ENCODE measurements at regions of chr17 and their contacts with region 1.

Region 1: GRCh38 chr17:29931231-29931932 is 1.4 kb upstream of the SSH2 start:
- DNase-seq: peak; percentile 44
- ATAC-seq: peak; percentile 77
- H3K4me3 Mint-ChIP-seq: no peak overlapping the region
- H3K27ac Mint-ChIP-seq: no peak overlapping the region
- H3K4me1 Mint-ChIP-seq: peaks cover 33% of the 10 kb centered on the region
- H3K27me3 Mint-ChIP-seq: no peaks in the 10 kb centered on the region
- CTCF ChIP-seq: no peak

Region 2: GRCh38 chr17:29589524-29590410 is 341.6 kb before region 1 on chr17 and contains the start of gene GIT1:
- CTCF ChIA-PET with region 1: interaction called, 16 read pairs
- POLR2A ChIA-PET with region 1: no interaction called
- intact Hi-C with region 1: loop called (anchors 2 kb)
- DNase-seq: peak; percentile 88
- ATAC-seq: peak; percentile 83
- H3K4me3 Mint-ChIP-seq: peak within 1 kb of the TSS; percentile 87
- H3K27ac Mint-ChIP-seq: peak within 1 kb of the TSS; percentile 83
- H3K4me1 Mint-ChIP-seq: peaks cover 73% of the 10 kb centered on the region
- H3K27me3 Mint-ChIP-seq: no peaks in the 10 kb centered on the region
- CTCF ChIP-seq: no peak
- total RNA-seq, gene GIT1: 41.7 and 45.3 TPM in 2 replicates

Region 3: DNA sequence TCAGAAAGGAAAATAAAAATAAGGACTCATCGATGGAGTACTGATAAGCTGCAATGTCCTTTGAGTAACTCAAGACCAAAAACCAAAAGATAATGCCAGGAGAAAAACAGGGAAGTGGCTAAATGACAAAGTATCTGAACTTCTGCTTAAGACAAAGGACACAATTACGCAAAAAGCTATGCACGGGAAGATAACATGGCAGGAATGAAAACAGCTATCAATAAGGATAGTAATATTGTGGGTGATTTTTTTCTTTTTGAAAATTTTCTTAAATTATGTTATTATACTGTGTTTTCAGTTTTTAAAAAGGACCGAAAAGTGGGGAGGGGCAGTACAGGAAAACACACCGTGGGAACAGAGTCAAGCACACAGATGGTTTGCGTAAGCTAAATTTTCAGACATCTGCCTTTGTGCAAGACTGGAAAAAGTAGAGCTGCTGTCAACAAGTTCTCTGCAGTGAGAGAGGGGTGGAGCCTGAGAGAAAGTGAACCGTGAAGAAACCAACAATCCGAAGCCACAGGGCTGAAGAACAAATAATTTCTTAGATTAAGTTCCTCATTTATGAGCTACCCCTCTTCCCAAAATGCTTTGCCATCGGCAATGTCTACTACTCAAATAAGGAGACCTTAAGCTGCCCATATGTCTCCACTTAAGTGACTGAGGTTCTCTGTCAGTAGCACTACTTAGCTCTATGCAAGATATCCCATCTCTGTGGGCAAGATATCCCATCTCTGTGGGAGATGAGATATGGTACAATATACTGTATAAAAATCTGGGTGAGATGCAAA is 208.8 kb before region 1 on chr17:
- CTCF ChIA-PET with region 1: no interaction called
- POLR2A ChIA-PET with region 1: interaction called, 11 read pairs
- intact Hi-C with region 1: loop called (anchors 1 kb)
- DNase-seq: no peak
- ATAC-seq: peak; percentile 85
- H3K4me3 Mint-ChIP-seq: peak overlapping the region; percentile 60
- H3K27ac Mint-ChIP-seq: peak overlapping the region; percentile 89
- H3K4me1 Mint-ChIP-seq: peaks cover 92% of the 10 kb centered on the region
- H3K27me3 Mint-ChIP-seq: no peaks in the 10 kb centered on the region
- CTCF ChIP-seq: no peak

Region 4: GRCh38 chr17:29855686-29856085 is 75.7 kb before region 1 on chr17:
- CTCF ChIA-PET with region 1: interaction called, 20 read pairs
- POLR2A ChIA-PET with region 1: interaction called, 32 read pairs
- intact Hi-C with region 1: loop called (anchors 1 kb)
- DNase-seq: no peak
- ATAC-seq: no peak
- H3K4me3 Mint-ChIP-seq: no peak overlapping the region
- H3K27ac Mint-ChIP-seq: peak overlapping the region; percentile 7
- H3K4me1 Mint-ChIP-seq: peaks cover 14% of the 10 kb centered on the region
- H3K27me3 Mint-ChIP-seq: no peaks in the 10 kb centered on the region
- CTCF ChIP-seq: no peak

Region 5: DNA sequence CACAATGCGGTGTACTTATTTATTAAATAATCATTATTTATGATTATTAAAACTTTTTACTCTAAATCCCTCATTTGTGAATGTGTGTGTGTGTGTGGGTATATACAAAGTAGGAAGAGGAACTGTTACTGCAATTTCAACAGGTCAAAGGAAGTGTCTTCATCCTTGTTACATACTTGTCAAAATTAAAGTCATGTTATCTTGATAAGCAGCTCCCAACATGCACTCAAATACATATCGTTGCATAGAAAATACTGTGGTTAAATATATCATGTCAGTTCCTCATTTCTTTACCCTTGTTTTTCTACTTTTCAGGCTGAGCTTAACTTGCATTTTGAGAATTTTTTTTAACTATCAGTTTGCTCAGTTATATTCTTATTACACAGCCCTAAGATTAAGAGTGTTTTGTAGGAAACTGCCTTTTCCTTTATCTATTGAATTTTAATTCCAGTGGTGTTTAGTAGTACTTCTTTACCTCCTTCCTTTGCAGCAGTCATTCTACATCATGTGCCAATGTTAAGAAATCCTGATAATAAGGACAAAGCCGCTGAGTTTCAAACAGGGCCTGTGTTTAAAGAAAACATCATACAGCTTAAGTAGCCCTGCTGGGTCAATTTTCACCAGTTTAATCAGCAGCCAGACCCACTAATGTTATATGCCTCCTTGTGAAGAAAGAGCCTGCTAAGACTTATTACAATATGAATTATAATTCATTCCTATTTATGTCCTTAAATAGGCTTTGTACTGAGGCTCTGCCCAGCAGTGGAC is 17.2 kb after region 1 on chr17:
- CTCF ChIA-PET with region 1: interaction called, 14 read pairs
- POLR2A ChIA-PET with region 1: interaction called, 29 read pairs
- intact Hi-C with region 1: no loop called
- DNase-seq: no peak
- ATAC-seq: peak; percentile 76
- H3K4me3 Mint-ChIP-seq: no peak overlapping the region
- H3K27ac Mint-ChIP-seq: peak overlapping the region; percentile 76
- H3K4me1 Mint-ChIP-seq: peaks cover 41% of the 10 kb centered on the region
- H3K27me3 Mint-ChIP-seq: no peaks in the 10 kb centered on the region
- CTCF ChIP-seq: no peak